BJ (cell line): ENCODE measurements at regions of chr15 and their contacts with region 1.

Region 1: GRCh38 chr15:80550219-80550907 is 144.7 kb upstream of the ABHD17C start:
- DNase-seq: peak; percentile 85
- H3K4me3 ChIP-seq: no peak overlapping the region
- H3K27me3 ChIP-seq: no peaks in the 10 kb centered on the region
- CTCF ChIP-seq: no peak

Region 2: GRCh38 chr15:80489030-80489594 is 61.3 kb before region 1 on chr15:
- CTCF ChIA-PET with region 1: no interaction called
- POLR2A ChIA-PET with region 1: interaction called, 19 read pairs
- DNase-seq: peak; percentile 97
- H3K4me3 ChIP-seq: no peak overlapping the region
- H3K27me3 ChIP-seq: no peaks in the 10 kb centered on the region
- CTCF ChIP-seq: no peak

Region 3: GRCh38 chr15:81685237-81685636 is 1134.9 kb after region 1 on chr15:
- CTCF ChIA-PET with region 1: no interaction called
- POLR2A ChIA-PET with region 1: no interaction called
- DNase-seq: no peak
- H3K4me3 ChIP-seq: no peak overlapping the region
- H3K27me3 ChIP-seq: no peaks in the 10 kb centered on the region
- CTCF ChIP-seq: no peak